AG04450 (cell line): ENCODE measurements at regions of chr22 and their contacts with region 1.

Region 1: DNA sequence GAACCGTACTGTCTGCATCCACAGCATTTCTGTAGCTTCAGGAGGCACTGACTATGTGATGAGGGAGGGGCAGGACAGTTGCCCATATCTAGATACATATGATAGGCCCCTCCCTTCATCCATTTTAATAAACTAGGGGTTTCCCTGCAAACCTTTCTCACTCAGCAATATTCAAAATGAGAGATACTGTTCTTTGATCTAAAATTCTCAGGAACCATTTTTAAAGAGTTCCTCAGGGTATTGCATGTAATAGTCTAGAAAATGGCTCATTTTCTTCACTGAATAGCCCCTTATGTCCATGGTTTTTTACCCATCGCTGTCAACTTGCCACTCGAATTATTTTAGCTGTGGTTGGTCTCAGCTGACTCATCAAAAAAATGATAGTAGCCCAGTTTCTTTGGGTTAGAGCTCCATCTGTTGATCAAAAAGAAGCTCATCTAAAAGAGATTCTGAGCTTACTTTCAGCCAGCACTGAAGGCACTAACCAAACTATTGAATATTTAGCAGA is 37.0 kb upstream of the DNAJB7 start:
- DNase-seq: peak; percentile 27
- H3K4me3 ChIP-seq: no peak overlapping the region
- H3K27ac ChIP-seq: no peak overlapping the region
- H3K27me3 ChIP-seq: no peaks in the 10 kb centered on the region
- CTCF ChIP-seq: peak; percentile 67

Region 2: DNA sequence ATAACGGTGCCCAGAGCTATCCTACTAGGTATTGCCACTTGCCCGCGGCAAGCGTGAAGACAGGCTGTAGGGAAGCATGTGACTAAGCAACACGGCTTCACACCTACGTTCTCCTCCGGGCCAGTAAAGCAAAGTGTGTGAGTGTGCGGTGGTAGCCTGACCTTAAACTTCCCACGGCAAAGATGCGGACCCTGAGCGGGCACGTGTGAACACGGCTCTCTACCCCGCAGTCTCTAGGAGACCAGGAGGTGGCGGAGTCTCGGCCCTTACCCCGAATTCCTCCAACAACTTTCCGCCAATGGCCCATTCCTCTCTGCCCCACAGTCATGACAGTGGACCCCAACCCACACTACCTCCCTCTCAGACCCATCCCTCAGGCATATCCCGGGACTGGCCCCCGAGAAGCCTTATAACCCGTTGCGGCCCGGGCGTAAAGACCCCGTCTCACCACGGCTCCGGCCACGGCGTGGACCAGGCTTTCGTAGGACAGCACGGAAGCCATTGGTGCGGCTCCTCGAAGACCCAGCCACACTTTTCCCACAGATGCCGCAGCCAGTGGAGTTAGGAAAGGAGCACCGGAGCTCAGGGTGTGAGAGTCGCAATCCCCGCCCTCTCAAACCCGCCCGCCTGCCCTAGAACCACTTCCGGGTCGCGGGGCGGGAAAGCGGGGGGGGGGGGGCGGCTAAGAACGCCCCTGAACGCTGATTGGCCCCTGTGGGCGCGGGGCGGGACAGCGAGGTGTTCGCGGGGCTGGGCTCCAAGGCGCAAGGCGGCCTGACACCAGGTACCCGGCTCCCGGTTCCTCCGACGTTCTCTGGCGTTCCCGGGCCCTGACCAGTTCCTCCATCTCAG is 79.9 kb before region 1 on chr22 and contains the start of gene SLC25A17:
- CTCF ChIA-PET with region 1: no interaction called
- POLR2A ChIA-PET with region 1: no interaction called
- DNase-seq: peak; percentile 29
- H3K4me3 ChIP-seq: peak within 1 kb of the TSS; percentile 99
- H3K27ac ChIP-seq: peak within 1 kb of the TSS; percentile 68
- H3K27me3 ChIP-seq: no peaks in the 10 kb centered on the region
- CTCF ChIP-seq: peak; percentile 62
- polyA plus RNA-seq, gene SLC25A17: 24.1 and 28.8 TPM in 2 replicates

Region 3: GRCh38 chr22:40877488-40877887 is 21.4 kb before region 1 on chr22:
- CTCF ChIA-PET with region 1: interaction called, 12 read pairs
- POLR2A ChIA-PET with region 1: interaction called, 3 read pairs
- DNase-seq: no peak
- H3K4me3 ChIP-seq: no peak overlapping the region
- H3K27ac ChIP-seq: no peak overlapping the region
- H3K27me3 ChIP-seq: no peaks in the 10 kb centered on the region
- CTCF ChIP-seq: no peak

Region 4: GRCh38 chr22:40911772-40912171 is 12.9 kb after region 1 on chr22:
- CTCF ChIA-PET with region 1: interaction called, 18 read pairs
- POLR2A ChIA-PET with region 1: no interaction called
- DNase-seq: no peak
- H3K4me3 ChIP-seq: no peak overlapping the region
- H3K27ac ChIP-seq: no peak overlapping the region
- H3K27me3 ChIP-seq: no peaks in the 10 kb centered on the region
- CTCF ChIP-seq: no peak